B cell (primary cell): ENCODE measurements at regions of chr21 and their contacts with region 1.

Region 1: GRCh38 chr21:34909492-34910292 is 139.4 kb downstream of the RUNX1 start:
- DNase-seq: no peak
- ATAC-seq: no peak
- H3K4me3 ChIP-seq: no peak overlapping the region
- H3K4me3 Mint-ChIP-seq: no peak overlapping the region
- H3K27ac ChIP-seq: no peak overlapping the region
- H3K27ac Mint-ChIP-seq: peak overlapping the region; percentile 10
- H3K4me1 ChIP-seq: peaks cover 47 to 48% of the 10 kb centered on the region in 2 donors
- H3K4me1 Mint-ChIP-seq: peaks cover 66% of the 10 kb centered on the region
- H3K27me3 ChIP-seq: no peaks in the 10 kb centered on the region
- H3K27me3 Mint-ChIP-seq: no peaks in the 10 kb centered on the region
- CTCF ChIP-seq: no peak

Region 2: DNA sequence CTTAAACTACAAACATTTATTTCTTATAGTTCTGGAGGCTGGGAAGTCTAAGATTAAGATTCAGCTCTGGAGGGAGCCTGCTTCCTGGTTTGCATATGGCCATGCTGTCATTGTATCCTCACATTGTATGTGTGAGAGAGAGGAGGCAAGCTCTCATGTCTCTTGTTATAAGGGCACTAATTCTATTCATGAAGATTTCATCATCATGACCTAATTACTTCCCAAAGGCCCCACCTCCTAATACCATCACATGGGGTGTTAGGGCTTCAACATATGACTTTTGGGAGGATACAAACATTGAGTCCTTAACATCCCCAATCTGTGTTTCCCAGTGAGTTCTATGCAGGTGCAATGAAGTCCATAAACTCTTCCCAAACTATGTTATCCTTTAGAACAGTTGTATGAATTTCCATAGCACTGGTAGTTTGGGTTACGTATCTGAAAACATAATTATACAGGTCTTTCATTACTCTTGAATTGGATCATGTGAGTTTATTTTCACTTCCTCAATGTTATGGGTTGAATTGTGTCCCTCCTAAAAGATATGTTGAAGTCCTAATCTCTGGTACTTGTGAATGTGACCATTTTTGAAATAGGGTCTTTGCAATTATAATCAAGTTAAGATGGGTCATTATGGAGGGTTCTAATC is 15.2 kb after region 1 on chr21:
- CTCF ChIA-PET with region 1: no interaction called
- POLR2A ChIA-PET with region 1: interaction called, 5 read pairs
- intact Hi-C with region 1: loop called (anchors 2 kb)
- DNase-seq: peak; percentile 80
- ATAC-seq: peak; percentile 80
- H3K4me3 ChIP-seq: peak overlapping the region in 1 of 5 experiments; percentile 23
- H3K4me3 Mint-ChIP-seq: peak overlapping the region; percentile 56
- H3K27ac ChIP-seq: peak overlapping the region; percentile 48 to 80
- H3K27ac Mint-ChIP-seq: peak overlapping the region; percentile 77
- H3K4me1 ChIP-seq: peaks cover 34 to 37% of the 10 kb centered on the region in 2 donors
- H3K4me1 Mint-ChIP-seq: peaks cover 67% of the 10 kb centered on the region
- H3K27me3 ChIP-seq: no peaks in the 10 kb centered on the region
- H3K27me3 Mint-ChIP-seq: no peaks in the 10 kb centered on the region
- CTCF ChIP-seq: no peak